Naive thymus-derived CD8-positive, alpha-beta T cell (primary cell): ENCODE measurements at regions of chr1 and their contacts with region 1.

Region 1: GRCh38 chr1:211258756-211259637 is at the start of gene RCOR3:
- DNase-seq: peak; percentile 83 to 94 (median 87)
- ATAC-seq: peak; percentile 72 to 75
- H3K4me3 Mint-ChIP-seq: peak within 1 kb of the TSS; percentile 90 to 96 (median 94)
- H3K27ac Mint-ChIP-seq: peak within 1 kb of the TSS; percentile 91 to 98 (median 96)
- H3K4me1 Mint-ChIP-seq: peaks cover 9 to 27% (median 25%) of the 10 kb centered on the region in 4 donors
- H3K27me3 Mint-ChIP-seq: no peaks in the 10 kb centered on the region
- polyA plus RNA-seq, gene RCOR3: 22.5 to 29.3 (median 24.7) TPM

Region 2: GRCh38 chr1:211174375-211174774 is 84.6 kb before region 1 on chr1:
- POLR2A ChIA-PET with region 1: no interaction called
- DNase-seq: no peak
- ATAC-seq: no peak
- H3K4me3 Mint-ChIP-seq: no peak overlapping the region
- H3K27ac Mint-ChIP-seq: no peak overlapping the region
- H3K4me1 Mint-ChIP-seq: no peaks in the 10 kb centered on the region
- H3K27me3 Mint-ChIP-seq: peaks cover 0 to 9% (median 0%) of the 10 kb centered on the region in 5 donors

Region 3: GRCh38 chr1:211229365-211229759 is 29.6 kb before region 1 on chr1:
- POLR2A ChIA-PET with region 1: interaction called, 14 read pairs
- DNase-seq: no peak
- ATAC-seq: peak; percentile 65 to 76
- H3K4me3 Mint-ChIP-seq: peak overlapping the region; percentile 56 to 78 (median 73)
- H3K27ac Mint-ChIP-seq: peak overlapping the region; percentile 67 to 93 (median 86)
- H3K4me1 Mint-ChIP-seq: peaks cover 17 to 30% (median 25%) of the 10 kb centered on the region in 4 donors
- H3K27me3 Mint-ChIP-seq: no peaks in the 10 kb centered on the region

Region 4: DNA sequence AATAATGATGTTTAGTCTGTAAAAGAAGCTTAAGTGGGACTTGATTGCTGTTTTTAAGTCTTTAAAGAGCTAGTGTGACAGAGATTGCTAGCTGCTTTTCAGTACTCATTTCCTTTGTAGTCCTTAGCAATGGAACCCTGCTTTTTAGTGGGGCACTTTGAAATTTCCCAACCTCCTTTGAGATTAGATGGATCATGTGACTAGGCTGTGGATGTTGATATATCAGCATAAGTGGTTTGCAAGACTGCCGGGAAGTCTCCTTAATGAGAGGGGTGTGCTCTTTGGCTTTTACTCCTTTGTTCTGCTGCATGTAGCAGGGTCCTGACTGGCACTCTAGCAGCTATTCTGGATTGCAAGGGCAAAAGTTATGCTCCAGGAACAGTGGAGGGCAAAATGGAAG is 11.1 kb before region 1 on chr1:
- POLR2A ChIA-PET with region 1: interaction called, 12 read pairs
- DNase-seq: peak in 1 of 10 donors; percentile 10
- ATAC-seq: no peak
- H3K4me3 Mint-ChIP-seq: no peak overlapping the region
- H3K27ac Mint-ChIP-seq: peak overlapping the region in 3 of 10 donors; percentile 48 to 63 (median 56)
- H3K4me1 Mint-ChIP-seq: peaks cover 0 to 9% (median 4%) of the 10 kb centered on the region in 4 donors
- H3K27me3 Mint-ChIP-seq: peaks cover 0 to 4% (median 2%) of the 10 kb centered on the region in 5 donors